ENCODE measurements at regions of chr3 and their contacts with region 1.

Region 1: DNA sequence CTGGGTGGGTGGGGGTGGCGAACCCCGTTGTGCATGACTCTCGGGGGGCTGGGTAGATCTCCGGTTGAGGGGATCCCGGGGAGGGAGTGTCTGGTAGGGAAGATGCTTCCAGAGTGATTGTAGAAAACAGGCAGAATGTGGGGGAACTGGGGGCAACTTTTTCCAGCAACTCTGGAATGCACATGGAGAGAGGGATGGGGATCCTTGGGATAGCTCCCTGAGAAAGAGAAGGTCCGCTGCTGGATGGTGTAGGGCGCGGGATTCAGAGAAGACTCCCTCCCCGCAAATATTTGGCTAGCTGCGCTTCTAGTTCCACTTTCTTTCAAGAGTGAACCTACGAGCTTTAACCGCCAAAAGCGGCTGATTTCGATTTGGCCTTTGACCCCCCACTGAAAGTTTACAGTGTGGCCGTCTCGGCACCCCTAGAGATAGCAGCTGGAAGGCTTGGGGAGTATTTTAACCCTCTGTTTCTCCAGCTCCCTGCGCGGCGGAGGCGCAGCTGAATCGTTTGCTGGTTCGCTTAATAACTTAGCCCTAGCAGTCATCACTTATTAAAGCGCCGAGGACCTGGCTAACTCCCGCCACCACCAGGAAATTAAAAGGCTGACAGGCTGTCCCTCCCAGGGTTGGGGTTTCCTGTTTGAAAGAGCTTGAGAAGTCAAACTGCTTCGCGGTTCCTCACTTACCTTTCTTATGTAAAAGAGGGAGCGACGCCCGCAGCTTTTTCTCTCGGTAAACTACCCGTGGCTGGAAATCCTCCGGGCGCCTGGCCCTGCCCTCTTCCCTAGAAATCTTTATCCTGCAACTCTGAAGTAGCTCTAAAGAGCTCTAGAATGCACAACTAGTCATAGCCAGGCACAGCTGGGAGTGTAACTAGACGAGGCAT is 1.2 kb downstream of the PHLDB2 start:
- DNase-seq: no peak
- H3K4me3 ChIP-seq: peak overlapping the region; percentile 81
- CTCF ChIP-seq: peak; percentile 56

Region 2: DNA sequence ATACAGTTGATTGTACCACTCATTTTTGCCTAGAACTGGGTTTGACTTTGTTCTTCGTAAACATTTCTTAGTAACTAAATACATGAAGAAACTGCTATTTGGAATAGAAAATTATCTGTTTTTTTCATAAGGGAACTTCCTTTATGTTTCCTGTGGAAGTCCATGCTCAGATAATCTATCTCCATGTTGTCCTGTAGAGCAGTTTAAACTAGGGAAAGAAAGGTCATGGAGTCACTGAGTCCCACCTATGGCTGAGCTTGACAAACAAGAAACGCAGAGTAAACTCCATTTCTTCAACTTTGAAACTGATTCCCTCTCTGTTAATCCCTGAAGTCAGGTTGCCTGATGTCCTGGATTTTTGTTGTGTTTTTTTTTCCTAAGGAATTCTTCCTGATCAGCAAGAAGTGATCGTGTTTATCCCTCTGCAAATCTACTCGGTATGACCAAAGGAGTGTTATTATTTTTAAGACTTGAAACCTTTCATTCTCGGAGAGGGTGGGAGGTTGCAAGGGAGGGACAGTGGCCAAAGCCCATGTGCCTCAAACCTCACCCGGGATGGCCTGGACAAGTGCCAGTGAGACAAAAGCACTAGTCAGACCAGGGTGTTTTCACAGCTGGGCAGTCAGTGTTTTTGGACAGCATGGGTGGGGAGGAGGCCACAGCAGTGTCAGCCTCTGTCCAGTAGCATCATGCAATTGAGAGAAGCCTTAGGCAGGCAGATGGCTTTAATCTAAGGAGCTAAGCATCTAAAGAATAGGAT is 130.9 kb before region 1 on chr3:
- CTCF ChIA-PET with region 1: interaction called, 408 read pairs
- POLR2A ChIA-PET with region 1: interaction called, 4 read pairs
- DNase-seq: peak; percentile 64
- H3K4me3 ChIP-seq: no peak overlapping the region
- CTCF ChIP-seq: no peak

Region 3: DNA sequence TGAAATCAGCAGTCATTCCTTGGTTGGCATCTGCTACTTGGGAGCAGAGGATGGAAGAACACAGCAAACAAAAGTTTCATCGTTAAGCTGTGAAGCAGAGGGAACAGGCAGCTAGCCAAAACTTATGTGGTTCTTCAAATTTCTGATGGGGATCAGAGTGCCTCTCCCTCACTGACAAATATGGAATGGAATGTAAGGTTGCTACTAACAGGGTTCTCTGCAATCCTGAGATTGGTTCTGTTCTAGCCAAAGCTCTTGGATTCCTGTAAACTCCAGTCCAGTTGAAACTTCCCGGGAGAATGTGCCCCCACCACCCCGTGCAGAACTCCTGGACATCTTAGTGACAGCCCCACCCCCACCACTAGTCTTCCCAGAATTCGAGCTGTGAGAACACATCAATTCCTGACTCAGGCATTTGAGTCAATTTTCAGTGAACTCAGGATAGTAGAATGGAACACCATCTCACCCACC is 57.1 kb before region 1 on chr3:
- CTCF ChIA-PET with region 1: no interaction called
- POLR2A ChIA-PET with region 1: interaction called, 14 read pairs
- DNase-seq: peak; percentile 99
- H3K4me3 ChIP-seq: no peak overlapping the region
- CTCF ChIP-seq: no peak